BJ (cell line): ENCODE measurements at regions of chr7 and their contacts with region 1.

Region 1: GRCh38 chr7:105452085-105452484 is 63.4 kb upstream of the SRPK2 start:
- DNase-seq: no peak
- H3K4me3 ChIP-seq: no peak overlapping the region
- H3K27me3 ChIP-seq: no peaks in the 10 kb centered on the region
- CTCF ChIP-seq: no peak

Region 2: GRCh38 chr7:105439174-105439893 is 12.8 kb before region 1 on chr7:
- CTCF ChIA-PET with region 1: interaction called, 10 read pairs
- POLR2A ChIA-PET with region 1: no interaction called
- DNase-seq: peak; percentile 90
- H3K4me3 ChIP-seq: no peak overlapping the region
- H3K27me3 ChIP-seq: no peaks in the 10 kb centered on the region
- CTCF ChIP-seq: peak; percentile 22; the same call in 1 of the 2 replicates